ENCODE measurements at regions of chr5 and their contacts with region 1.

Region 1: DNA sequence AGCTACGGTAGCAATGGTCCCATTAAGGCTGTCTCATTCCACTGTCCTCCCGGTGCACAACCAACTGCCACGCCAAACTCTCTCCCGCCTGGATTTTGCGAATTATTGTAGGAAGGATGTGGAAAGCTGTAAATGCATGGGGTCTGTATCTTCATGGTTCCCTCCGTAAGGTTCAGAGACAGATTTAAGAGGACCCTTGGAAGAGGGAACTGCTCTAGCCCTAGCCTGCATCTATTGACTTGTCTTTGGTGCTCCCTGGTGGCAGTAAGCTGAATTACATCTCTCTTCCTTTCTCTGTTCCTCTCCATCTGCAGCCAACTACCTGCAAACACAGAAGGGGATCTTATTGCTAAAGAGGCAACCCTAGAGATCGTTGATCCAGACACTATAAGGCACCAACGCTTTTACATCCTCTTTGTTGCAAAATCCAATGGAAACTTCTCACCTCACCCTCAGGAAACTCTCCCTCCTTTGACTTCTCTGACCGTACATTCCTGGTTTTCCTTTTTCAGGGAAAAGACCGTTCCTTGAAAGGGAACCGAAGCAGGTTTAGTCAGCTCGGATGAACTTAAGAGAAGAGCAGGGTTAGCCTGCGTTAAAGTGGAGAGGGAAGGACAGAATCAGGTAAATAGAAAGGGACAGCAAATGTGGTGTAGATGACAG is 11.9 kb downstream of the CAPSL start:
- DNase-seq: no peak
- ATAC-seq: peak; percentile 76
- H3K4me3 Mint-ChIP-seq: no peak overlapping the region
- H3K27ac Mint-ChIP-seq: no peak overlapping the region
- H3K4me1 Mint-ChIP-seq: peaks cover 7% of the 10 kb centered on the region
- H3K27me3 Mint-ChIP-seq: peaks cover 21% of the 10 kb centered on the region
- CTCF ChIP-seq: peak; percentile 59

Region 2: DNA sequence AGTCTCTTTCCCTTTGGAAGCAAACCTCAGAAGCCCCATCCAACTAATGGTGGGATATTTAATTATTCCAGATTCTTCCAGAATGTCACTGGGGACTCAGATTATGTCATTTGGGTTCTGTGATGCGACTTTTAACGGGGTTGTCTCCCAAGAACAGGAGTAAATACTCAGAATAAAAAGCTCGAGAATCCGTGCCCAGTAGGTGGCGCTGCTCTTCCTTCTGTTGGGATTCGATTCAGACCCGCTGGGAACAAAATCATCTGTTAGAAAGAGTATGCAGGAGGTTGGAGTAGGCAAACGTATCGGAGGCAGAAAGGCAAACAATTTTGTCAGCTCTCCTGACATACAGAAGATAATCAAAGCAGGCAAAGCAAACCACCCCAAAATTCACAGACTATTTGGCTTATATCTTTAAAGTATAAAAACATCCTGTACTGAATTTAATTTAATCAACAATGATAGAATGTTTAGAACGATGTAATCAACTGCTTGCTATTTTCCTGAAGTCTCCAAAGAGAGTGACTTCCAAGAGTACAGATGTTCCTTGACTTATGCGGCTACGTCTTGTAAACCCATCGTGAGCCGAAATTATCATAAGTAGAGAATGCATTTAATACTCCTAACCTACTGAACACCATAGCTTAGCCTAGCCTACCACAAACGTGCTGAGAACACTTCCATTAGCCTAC is 1440.2 kb before region 1 on chr5:
- CTCF ChIA-PET with region 1: no interaction called
- POLR2A ChIA-PET with region 1: no interaction called
- intact Hi-C with region 1: loop called (anchors 5 kb)
- DNase-seq: peak; percentile 36
- ATAC-seq: peak; percentile 18
- H3K4me3 Mint-ChIP-seq: no peak overlapping the region
- H3K27ac Mint-ChIP-seq: no peak overlapping the region
- H3K4me1 Mint-ChIP-seq: peaks cover 3% of the 10 kb centered on the region
- H3K27me3 Mint-ChIP-seq: peaks cover 14% of the 10 kb centered on the region
- CTCF ChIP-seq: peak; percentile 71

Region 3: GRCh38 chr5:34957857-34958690 is 968.4 kb before region 1 on chr5:
- CTCF ChIA-PET with region 1: no interaction called
- POLR2A ChIA-PET with region 1: no interaction called
- intact Hi-C with region 1: loop called (anchors 1 kb)
- DNase-seq: no peak
- ATAC-seq: no peak
- H3K4me3 Mint-ChIP-seq: no peak overlapping the region
- H3K27ac Mint-ChIP-seq: no peak overlapping the region
- H3K4me1 Mint-ChIP-seq: peaks cover 5% of the 10 kb centered on the region
- H3K27me3 Mint-ChIP-seq: no peaks in the 10 kb centered on the region
- CTCF ChIP-seq: no peak

Region 4: DNA sequence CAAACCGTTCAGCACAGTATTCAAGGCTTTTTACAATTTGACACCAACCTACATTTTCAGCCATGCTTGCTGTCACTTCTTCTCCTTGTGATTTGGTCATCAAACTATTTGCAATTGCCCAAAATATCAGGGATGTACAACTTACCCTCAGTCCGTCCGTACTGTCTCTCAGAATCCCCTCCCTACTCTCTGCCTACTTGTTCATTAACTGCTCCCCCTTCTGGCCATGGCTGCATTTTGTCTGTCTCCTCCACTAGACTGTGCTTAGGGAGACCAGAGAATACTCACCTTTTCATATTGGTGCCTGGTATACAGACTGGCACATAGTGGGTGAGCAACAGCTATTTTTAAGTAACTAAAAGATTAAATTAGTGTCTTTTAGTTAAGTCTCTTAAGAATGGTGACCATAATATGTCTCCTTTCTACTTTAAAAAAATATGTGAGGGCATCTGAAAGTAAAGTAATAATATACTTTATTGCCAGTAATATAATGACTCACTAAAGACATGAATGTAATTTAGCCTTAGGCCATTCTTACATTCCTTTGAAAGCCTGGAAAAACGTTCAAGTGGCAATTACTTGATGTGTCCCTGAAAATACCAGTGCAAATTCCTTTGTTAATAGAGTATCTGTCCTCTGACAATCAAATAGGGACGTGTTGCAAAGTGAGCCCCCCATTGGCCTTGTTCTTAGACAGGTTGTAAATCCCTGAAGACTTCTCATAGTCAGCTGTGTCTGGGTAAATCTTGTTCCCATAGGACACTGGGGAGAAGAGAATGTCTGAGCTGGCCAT is 724.0 kb before region 1 on chr5:
- CTCF ChIA-PET with region 1: no interaction called
- POLR2A ChIA-PET with region 1: no interaction called
- intact Hi-C with region 1: loop called (anchors 1 kb)
- DNase-seq: no peak
- ATAC-seq: peak; percentile 93
- H3K4me3 Mint-ChIP-seq: no peak overlapping the region
- H3K27ac Mint-ChIP-seq: no peak overlapping the region
- H3K4me1 Mint-ChIP-seq: peaks cover 2% of the 10 kb centered on the region
- H3K27me3 Mint-ChIP-seq: peaks cover 3% of the 10 kb centered on the region
- CTCF ChIP-seq: no peak

Region 5: GRCh38 chr5:35617435-35618303 is 308.9 kb before region 1 on chr5 and contains the start of gene SPEF2:
- CTCF ChIA-PET with region 1: interaction called, 9 read pairs
- POLR2A ChIA-PET with region 1: no interaction called
- intact Hi-C with region 1: loop called (anchors 1 kb)
- DNase-seq: peak; percentile 36
- ATAC-seq: peak; percentile 78
- H3K4me3 Mint-ChIP-seq: peak within 1 kb of the TSS; percentile 85
- H3K27ac Mint-ChIP-seq: no peak within 1 kb of the TSS
- H3K4me1 Mint-ChIP-seq: peaks cover 10% of the 10 kb centered on the region
- H3K27me3 Mint-ChIP-seq: peaks cover 15% of the 10 kb centered on the region
- CTCF ChIP-seq: no peak
- total RNA-seq, gene SPEF2: 2.4 and 3.7 TPM in 2 replicates

Region 6: GRCh38 chr5:35777358-35778087 is 149.0 kb before region 1 on chr5:
- CTCF ChIA-PET with region 1: interaction called, 28 read pairs
- POLR2A ChIA-PET with region 1: no interaction called
- intact Hi-C with region 1: loop called (anchors 1 kb)
- DNase-seq: no peak
- ATAC-seq: no peak
- H3K4me3 Mint-ChIP-seq: no peak overlapping the region
- H3K27ac Mint-ChIP-seq: no peak overlapping the region
- H3K4me1 Mint-ChIP-seq: no peaks in the 10 kb centered on the region
- H3K27me3 Mint-ChIP-seq: no peaks in the 10 kb centered on the region
- CTCF ChIP-seq: no peak

Measured in activated B cell treated with CpG ODN at 0.5 μM for 24 hours (primary cell).